ENCODE measurements at regions of chr7 and their contacts with region 1.

Region 1: GRCh38 chr7:55641273-55641691 is 69.0 kb upstream of the VOPP1 start:
- DNase-seq: peak; percentile 53
- CTCF ChIP-seq: peak; percentile 80

Region 2: GRCh38 chr7:55572378-55573233 is 68.7 kb before region 1 on chr7 and contains the start of gene VOPP1:
- CTCF ChIA-PET with region 1: no interaction called
- POLR2A ChIA-PET with region 1: no interaction called
- DNase-seq: peak; percentile 89
- CTCF ChIP-seq: no peak

Region 3: GRCh38 chr7:55629051-55629677 is 12.1 kb before region 1 on chr7:
- CTCF ChIA-PET with region 1: interaction called, 26 read pairs
- POLR2A ChIA-PET with region 1: interaction called, 8 read pairs
- DNase-seq: no peak
- CTCF ChIP-seq: no peak

Region 4: GRCh38 chr7:55657654-55658053 is 16.4 kb after region 1 on chr7:
- CTCF ChIA-PET with region 1: interaction called, 20 read pairs
- POLR2A ChIA-PET with region 1: no interaction called
- DNase-seq: no peak
- CTCF ChIP-seq: no peak

Region 5: DNA sequence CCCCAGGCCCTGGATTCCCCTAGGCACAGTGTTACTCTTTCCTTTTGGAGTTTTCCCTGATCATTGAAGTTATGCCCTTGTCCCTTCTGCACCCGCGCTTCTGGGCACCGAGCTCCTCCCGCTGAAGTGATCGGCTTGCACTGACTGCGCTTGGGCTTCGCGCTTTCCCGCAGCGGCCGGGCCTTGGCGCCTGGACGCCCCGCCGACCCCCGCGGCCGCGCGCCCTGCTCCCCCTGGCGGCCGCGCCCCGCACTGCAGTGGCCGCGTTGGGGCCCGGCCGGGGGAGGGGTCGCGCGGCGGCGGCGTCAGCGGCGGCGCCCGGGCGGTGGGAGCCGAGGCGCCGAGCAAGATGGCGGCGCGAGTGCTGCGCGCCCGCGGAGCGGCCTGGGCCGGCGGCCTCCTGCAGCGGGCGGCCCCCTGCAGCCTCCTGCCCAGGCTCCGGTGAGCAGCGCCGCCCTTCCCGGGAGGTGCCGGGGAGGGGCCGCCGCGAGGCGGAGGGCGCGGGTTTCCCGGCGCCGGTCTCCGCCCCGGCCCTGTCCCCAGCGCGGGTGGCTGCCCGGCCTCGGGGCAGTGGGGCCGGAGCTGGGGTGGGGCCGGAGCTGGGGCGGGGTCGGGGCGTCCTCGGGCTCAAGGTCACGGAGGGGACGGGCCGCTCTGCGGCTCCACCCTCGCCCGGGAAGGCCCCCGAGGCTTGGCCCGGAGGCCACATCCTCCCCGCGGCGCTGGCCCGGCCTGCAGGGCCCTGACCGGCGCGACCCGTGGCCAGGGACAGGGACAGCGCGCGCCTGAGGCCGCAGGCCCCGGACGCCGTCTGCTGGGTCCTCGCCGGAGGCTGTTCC is 323.2 kb after region 1 on chr7 and contains the start of gene NIPSNAP2:
- CTCF ChIA-PET with region 1: interaction called, 22 read pairs
- POLR2A ChIA-PET with region 1: no interaction called
- DNase-seq: peak; percentile 89
- CTCF ChIP-seq: peak; percentile 91

Region 6: GRCh38 chr7:56074371-56074791 is 433.1 kb after region 1 on chr7:
- CTCF ChIA-PET with region 1: interaction called, 37 read pairs
- POLR2A ChIA-PET with region 1: no interaction called
- DNase-seq: peak; percentile 78
- CTCF ChIP-seq: peak; percentile 85